PC-9 (cell line): ENCODE measurements at regions of chr7 and their contacts with region 1.

Region 1: GRCh38 chr7:14666304-14666703 is 236.2 kb downstream of the DGKB start:
- DNase-seq: no peak
- H3K4me3 ChIP-seq: no peak overlapping the region
- H3K27ac ChIP-seq: no peak overlapping the region
- H3K4me1 ChIP-seq: no peaks in the 10 kb centered on the region
- H3K27me3 ChIP-seq: no peaks in the 10 kb centered on the region
- CTCF ChIP-seq: no peak

Region 2: GRCh38 chr7:14021069-14021468 is 645.2 kb before region 1 on chr7:
- CTCF ChIA-PET with region 1: no interaction called
- POLR2A ChIA-PET with region 1: interaction called, 17 read pairs
- intact Hi-C with region 1: no loop called
- DNase-seq: no peak
- H3K4me3 ChIP-seq: no peak overlapping the region
- H3K27ac ChIP-seq: no peak overlapping the region
- H3K4me1 ChIP-seq: no peaks in the 10 kb centered on the region
- H3K27me3 ChIP-seq: no peaks in the 10 kb centered on the region
- CTCF ChIP-seq: no peak

Region 3: GRCh38 chr7:14576578-14576977 is 89.7 kb before region 1 on chr7:
- CTCF ChIA-PET with region 1: no interaction called
- POLR2A ChIA-PET with region 1: no interaction called
- intact Hi-C with region 1: no loop called
- DNase-seq: no peak
- H3K4me3 ChIP-seq: no peak overlapping the region
- H3K27ac ChIP-seq: no peak overlapping the region
- H3K4me1 ChIP-seq: no peaks in the 10 kb centered on the region
- H3K27me3 ChIP-seq: no peaks in the 10 kb centered on the region
- CTCF ChIP-seq: no peak